ENCODE measurements at regions of chr9 and their contacts with region 1.

Region 1: GRCh38 chr9:121322037-121322775 is 47.8 kb downstream of the STOM start:
- DNase-seq: peak in 1 of 2 donors; percentile 12
- ATAC-seq: no peak
- H3K4me3 ChIP-seq: no peak overlapping the region
- H3K4me3 Mint-ChIP-seq: peak overlapping the region; percentile 4
- H3K27ac ChIP-seq: no peak overlapping the region
- H3K27ac Mint-ChIP-seq: peak overlapping the region; percentile 10 to 30
- H3K4me1 ChIP-seq: peaks cover 27% of the 10 kb centered on the region
- H3K4me1 Mint-ChIP-seq: peaks cover 38 to 47% of the 10 kb centered on the region in 2 donors
- H3K27me3 ChIP-seq: no peaks in the 10 kb centered on the region
- H3K27me3 Mint-ChIP-seq: no peaks in the 10 kb centered on the region
- CTCF ChIP-seq: no peak

Region 2: GRCh38 chr9:121201738-121202533 is 120.3 kb before region 1 on chr9 and contains the start of gene RAB14:
- intact Hi-C with region 1: loop called (anchors 5 kb)
- DNase-seq: peak; percentile 100
- ATAC-seq: peak; percentile 88 to 96 (median 89)
- H3K4me3 ChIP-seq: peak within 1 kb of the TSS; percentile 96
- H3K4me3 Mint-ChIP-seq: peak within 1 kb of the TSS; percentile 94
- H3K27ac ChIP-seq: peak within 1 kb of the TSS; percentile 92
- H3K27ac Mint-ChIP-seq: peak within 1 kb of the TSS; percentile 89 to 94
- H3K4me1 ChIP-seq: peaks cover 19% of the 10 kb centered on the region
- H3K4me1 Mint-ChIP-seq: peaks cover 47 to 50% of the 10 kb centered on the region in 2 donors
- H3K27me3 ChIP-seq: no peaks in the 10 kb centered on the region
- H3K27me3 Mint-ChIP-seq: no peaks in the 10 kb centered on the region
- CTCF ChIP-seq: peak; percentile 42
- total RNA-seq, gene RAB14: 46.2 to 67.6 (median 57.3) TPM

Region 3: GRCh38 chr9:121213136-121213806 is 108.9 kb before region 1 on chr9:
- intact Hi-C with region 1: loop called (anchors 1 kb)
- DNase-seq: peak; percentile 56 to 79
- ATAC-seq: peak; percentile 73 to 85 (median 81)
- H3K4me3 ChIP-seq: no peak overlapping the region
- H3K4me3 Mint-ChIP-seq: no peak overlapping the region
- H3K27ac ChIP-seq: no peak overlapping the region
- H3K27ac Mint-ChIP-seq: no peak overlapping the region
- H3K4me1 ChIP-seq: peaks cover 8% of the 10 kb centered on the region
- H3K4me1 Mint-ChIP-seq: peaks cover 3 to 8% of the 10 kb centered on the region in 2 donors
- H3K27me3 ChIP-seq: no peaks in the 10 kb centered on the region
- H3K27me3 Mint-ChIP-seq: no peaks in the 10 kb centered on the region
- CTCF ChIP-seq: peak; percentile 83

Region 4: GRCh38 chr9:121340676-121341392 is 18.6 kb after region 1 on chr9:
- intact Hi-C with region 1: no loop called
- DNase-seq: no peak
- ATAC-seq: no peak
- H3K4me3 ChIP-seq: no peak overlapping the region
- H3K4me3 Mint-ChIP-seq: no peak overlapping the region
- H3K27ac ChIP-seq: no peak overlapping the region
- H3K27ac Mint-ChIP-seq: peak overlapping the region; percentile 63 to 71
- H3K4me1 ChIP-seq: peaks cover 14% of the 10 kb centered on the region
- H3K4me1 Mint-ChIP-seq: peaks cover 77 to 79% of the 10 kb centered on the region in 2 donors
- H3K27me3 ChIP-seq: no peaks in the 10 kb centered on the region
- H3K27me3 Mint-ChIP-seq: no peaks in the 10 kb centered on the region
- CTCF ChIP-seq: no peak

Region 5: DNA sequence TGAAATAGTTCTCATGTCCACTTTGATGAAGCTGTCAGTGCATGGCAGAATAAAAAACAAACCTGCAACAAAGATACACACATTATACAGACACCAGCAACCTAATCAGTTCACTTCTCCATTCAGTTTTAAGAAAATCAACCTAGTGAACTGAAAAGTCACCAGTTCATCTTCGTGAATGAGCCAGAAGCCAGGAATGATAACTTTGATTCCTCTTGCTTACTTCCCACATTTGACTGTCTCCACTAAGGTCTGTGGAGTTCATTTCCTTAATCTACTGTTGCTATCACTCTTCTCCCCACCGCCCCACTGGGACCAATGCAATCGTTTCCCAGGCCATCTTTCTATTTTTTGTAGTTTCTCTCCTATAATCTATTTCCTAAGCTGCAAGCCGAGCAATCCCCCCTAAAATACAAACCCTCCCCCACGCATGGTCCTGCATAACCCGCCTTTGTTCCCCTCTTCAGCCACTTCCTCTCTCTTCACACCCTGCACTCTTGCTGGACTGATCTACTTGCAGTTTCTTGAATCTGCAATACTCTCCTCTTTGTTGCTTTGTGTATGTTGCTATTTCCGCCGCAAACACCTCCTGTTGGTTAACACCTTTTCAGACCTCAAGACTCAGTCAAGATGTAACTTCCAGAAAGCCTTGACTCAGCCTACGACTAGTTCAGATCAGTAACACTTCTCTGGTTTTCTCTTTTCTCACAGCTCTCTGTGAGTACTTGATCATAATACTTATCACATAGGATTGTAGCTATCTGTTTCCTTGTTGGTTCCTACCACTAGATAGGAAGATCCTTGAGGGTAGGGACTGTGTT is 31.2 kb after region 1 on chr9:
- intact Hi-C with region 1: loop called (anchors 1 kb)
- DNase-seq: peak; percentile 67 to 88
- ATAC-seq: peak; percentile 84 to 94 (median 92)
- H3K4me3 ChIP-seq: peak overlapping the region; percentile 11
- H3K4me3 Mint-ChIP-seq: peak overlapping the region; percentile 80
- H3K27ac ChIP-seq: peak overlapping the region; percentile 84
- H3K27ac Mint-ChIP-seq: peak overlapping the region; percentile 87 to 93
- H3K4me1 ChIP-seq: peaks cover 58% of the 10 kb centered on the region
- H3K4me1 Mint-ChIP-seq: peaks cover 75 to 86% of the 10 kb centered on the region in 2 donors
- H3K27me3 ChIP-seq: no peaks in the 10 kb centered on the region
- H3K27me3 Mint-ChIP-seq: no peaks in the 10 kb centered on the region
- CTCF ChIP-seq: no peak

Region 6: GRCh38 chr9:121376214-121376830 is 54.1 kb after region 1 on chr9:
- intact Hi-C with region 1: loop called (anchors 1 kb)
- DNase-seq: peak in 1 of 2 donors; percentile 53
- ATAC-seq: peak in 2 of 3 donors; percentile 52 to 59
- H3K4me3 ChIP-seq: no peak overlapping the region
- H3K4me3 Mint-ChIP-seq: no peak overlapping the region
- H3K27ac ChIP-seq: no peak overlapping the region
- H3K27ac Mint-ChIP-seq: no peak overlapping the region
- H3K4me1 ChIP-seq: no peaks in the 10 kb centered on the region
- H3K4me1 Mint-ChIP-seq: peaks cover 9 to 22% of the 10 kb centered on the region in 2 donors
- H3K27me3 ChIP-seq: no peaks in the 10 kb centered on the region
- H3K27me3 Mint-ChIP-seq: no peaks in the 10 kb centered on the region
- CTCF ChIP-seq: peak; percentile 84

Region 7: GRCh38 chr9:121388140-121388905 is 66.1 kb after region 1 on chr9:
- intact Hi-C with region 1: no loop called
- DNase-seq: no peak
- ATAC-seq: no peak
- H3K4me3 ChIP-seq: no peak overlapping the region
- H3K4me3 Mint-ChIP-seq: no peak overlapping the region
- H3K27ac ChIP-seq: no peak overlapping the region
- H3K27ac Mint-ChIP-seq: no peak overlapping the region
- H3K4me1 ChIP-seq: no peaks in the 10 kb centered on the region
- H3K4me1 Mint-ChIP-seq: peaks cover 13% of the 10 kb centered on the region in 2 donors
- H3K27me3 ChIP-seq: no peaks in the 10 kb centered on the region
- H3K27me3 Mint-ChIP-seq: peaks cover 0 to 3% of the 10 kb centered on the region in 2 donors
- CTCF ChIP-seq: no peak

Region 8: DNA sequence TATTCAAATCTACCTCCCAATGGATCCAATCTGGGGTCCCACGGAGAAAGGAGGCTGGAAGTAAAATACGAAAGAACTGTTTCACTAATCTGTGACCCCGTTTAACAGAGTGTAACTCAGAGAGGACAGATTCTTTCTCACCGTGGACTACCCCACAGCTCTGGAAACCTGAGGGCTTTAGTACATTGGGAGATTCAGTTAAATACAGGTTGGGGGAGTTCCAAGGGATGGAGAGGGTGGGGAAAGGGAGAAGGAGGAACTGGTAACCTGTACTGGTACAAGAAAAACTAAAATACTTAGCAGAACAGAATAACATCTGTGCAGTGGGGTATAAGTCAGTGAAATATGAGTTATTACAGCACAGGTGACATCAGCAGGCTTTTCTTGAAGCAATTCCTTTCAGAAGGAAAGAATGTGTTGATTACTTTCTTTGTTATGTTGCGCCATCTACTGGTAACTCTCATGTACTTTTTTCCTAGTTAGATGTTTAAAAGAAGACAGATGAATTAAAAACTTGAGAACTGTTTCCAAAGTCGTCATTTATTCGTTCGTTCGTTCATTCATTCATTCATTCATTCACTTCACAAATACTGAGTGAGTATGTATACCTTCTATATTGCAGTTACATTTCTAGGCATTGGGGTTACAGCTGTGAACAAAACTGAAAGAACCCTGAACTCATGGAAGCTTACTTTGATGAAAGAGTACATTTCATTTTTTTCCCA is 77.8 kb after region 1 on chr9:
- intact Hi-C with region 1: loop called (anchors 1 kb)
- DNase-seq: peak in 1 of 2 donors; percentile 83
- ATAC-seq: peak; percentile 54 to 65 (median 64)
- H3K4me3 ChIP-seq: no peak overlapping the region
- H3K4me3 Mint-ChIP-seq: no peak overlapping the region
- H3K27ac ChIP-seq: no peak overlapping the region
- H3K27ac Mint-ChIP-seq: no peak overlapping the region
- H3K4me1 ChIP-seq: no peaks in the 10 kb centered on the region
- H3K4me1 Mint-ChIP-seq: no peaks in the 10 kb centered on the region
- H3K27me3 ChIP-seq: no peaks in the 10 kb centered on the region
- H3K27me3 Mint-ChIP-seq: no peaks in the 10 kb centered on the region
- CTCF ChIP-seq: peak; percentile 86

Measured in natural killer cell (primary cell).